GM12878 (cell line): ENCODE measurements at regions of chr12 and their contacts with region 1.

Region 1: DNA sequence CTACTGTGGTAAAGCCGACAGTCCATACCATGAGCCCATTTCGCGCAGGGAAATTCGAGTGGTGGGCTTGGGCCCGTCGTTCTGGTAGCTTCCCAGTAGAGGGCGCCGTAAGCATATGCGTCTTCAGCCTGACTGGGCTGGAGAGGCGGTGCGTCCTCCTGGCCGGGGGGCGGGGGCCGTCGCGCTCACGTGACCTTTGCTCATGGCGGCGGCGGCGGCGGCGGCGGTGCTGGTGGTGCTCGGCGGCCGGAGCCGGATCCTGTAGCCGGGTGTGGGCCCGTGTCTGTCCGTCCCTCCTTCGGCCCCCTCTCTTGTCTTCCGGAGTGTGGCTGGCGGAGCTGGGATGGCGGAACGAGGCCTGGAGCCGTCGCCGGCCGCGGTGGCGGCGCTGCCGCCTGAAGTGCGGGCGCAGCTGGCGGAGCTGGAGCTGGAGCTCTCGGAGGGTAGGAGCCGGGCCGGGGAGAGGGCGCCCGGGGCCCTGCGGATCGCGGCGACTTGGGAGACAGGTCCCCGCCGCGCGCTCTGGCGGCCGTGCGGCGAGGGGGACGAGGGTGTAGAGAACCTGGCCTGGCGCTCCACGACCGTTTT is at the start of gene DIP2B:
- DNase-seq: peak; percentile 50
- ATAC-seq: peak; percentile 87
- H3K4me3 ChIP-seq: peak within 1 kb of the TSS; percentile 96
- H3K27ac ChIP-seq: peak within 1 kb of the TSS; percentile 89
- H3K4me1 ChIP-seq: peaks cover 21% of the 10 kb centered on the region
- H3K27me3 ChIP-seq: no peaks in the 10 kb centered on the region
- CTCF ChIP-seq: peak; percentile 90 to 95 (median 93); a peak in 5 of 6 replicates
- EP300 ChIP-seq: no peak
- POLR2A ChIP-seq: peak; percentile 85
- RAD21 ChIP-seq: peak; percentile 96
- polyA plus RNA-seq, gene DIP2B: 4.5 to 4.6 TPM

Region 2: GRCh38 chr12:50458606-50459005 is 46.3 kb before region 1 on chr12:
- CTCF ChIA-PET with region 1: no interaction called
- POLR2A ChIA-PET with region 1: no interaction called
- RAD21 ChIA-PET with region 1: no interaction called
- SMC1A ChIA-PET with region 1: no interaction called
- in situ Hi-C with region 1: no loop called
- intact Hi-C with region 1: no loop called
- DNase-seq: no peak
- ATAC-seq: no peak
- H3K4me3 ChIP-seq: no peak overlapping the region
- H3K27ac ChIP-seq: no peak overlapping the region
- H3K4me1 ChIP-seq: no peaks in the 10 kb centered on the region
- H3K27me3 ChIP-seq: no peaks in the 10 kb centered on the region
- CTCF ChIP-seq: no peak
- EP300 ChIP-seq: no peak
- POLR2A ChIP-seq: no peak
- RAD21 ChIP-seq: no peak

Region 3: GRCh38 chr12:50517456-50518048 is 12.7 kb after region 1 on chr12:
- CTCF ChIA-PET with region 1: interaction called, 86 read pairs
- POLR2A ChIA-PET with region 1: interaction called, 58 read pairs
- RAD21 ChIA-PET with region 1: interaction called, 96 read pairs
- SMC1A ChIA-PET with region 1: interaction called, 85 read pairs
- in situ Hi-C with region 1: no loop called
- intact Hi-C with region 1: no loop called
- DNase-seq: peak; percentile 84
- ATAC-seq: peak; percentile 86
- H3K4me3 ChIP-seq: peak overlapping the region; percentile 15; the same call in 1 of the 2 replicates
- H3K27ac ChIP-seq: peak overlapping the region; percentile 75
- H3K4me1 ChIP-seq: peaks cover 66% of the 10 kb centered on the region
- H3K27me3 ChIP-seq: no peaks in the 10 kb centered on the region
- CTCF ChIP-seq: no peak
- EP300 ChIP-seq: no peak
- POLR2A ChIP-seq: peak; percentile 26; the same call in 1 of the 2 replicates
- RAD21 ChIP-seq: no peak

Region 4: GRCh38 chr12:50542448-50542847 is 37.6 kb after region 1 on chr12:
- CTCF ChIA-PET with region 1: interaction called, 7 read pairs
- POLR2A ChIA-PET with region 1: interaction called, 8 read pairs
- RAD21 ChIA-PET with region 1: interaction called, 56 read pairs
- SMC1A ChIA-PET with region 1: interaction called, 94 read pairs
- in situ Hi-C with region 1: no loop called
- intact Hi-C with region 1: loop called (anchors 5 kb)
- DNase-seq: no peak
- ATAC-seq: peak; percentile 89
- H3K4me3 ChIP-seq: no peak overlapping the region
- H3K27ac ChIP-seq: peak overlapping the region; percentile 39
- H3K4me1 ChIP-seq: peaks cover 19% of the 10 kb centered on the region; the same call in 1 of the 2 replicates
- H3K27me3 ChIP-seq: no peaks in the 10 kb centered on the region
- CTCF ChIP-seq: no peak
- EP300 ChIP-seq: no peak
- POLR2A ChIP-seq: no peak
- RAD21 ChIP-seq: no peak

Region 5: DNA sequence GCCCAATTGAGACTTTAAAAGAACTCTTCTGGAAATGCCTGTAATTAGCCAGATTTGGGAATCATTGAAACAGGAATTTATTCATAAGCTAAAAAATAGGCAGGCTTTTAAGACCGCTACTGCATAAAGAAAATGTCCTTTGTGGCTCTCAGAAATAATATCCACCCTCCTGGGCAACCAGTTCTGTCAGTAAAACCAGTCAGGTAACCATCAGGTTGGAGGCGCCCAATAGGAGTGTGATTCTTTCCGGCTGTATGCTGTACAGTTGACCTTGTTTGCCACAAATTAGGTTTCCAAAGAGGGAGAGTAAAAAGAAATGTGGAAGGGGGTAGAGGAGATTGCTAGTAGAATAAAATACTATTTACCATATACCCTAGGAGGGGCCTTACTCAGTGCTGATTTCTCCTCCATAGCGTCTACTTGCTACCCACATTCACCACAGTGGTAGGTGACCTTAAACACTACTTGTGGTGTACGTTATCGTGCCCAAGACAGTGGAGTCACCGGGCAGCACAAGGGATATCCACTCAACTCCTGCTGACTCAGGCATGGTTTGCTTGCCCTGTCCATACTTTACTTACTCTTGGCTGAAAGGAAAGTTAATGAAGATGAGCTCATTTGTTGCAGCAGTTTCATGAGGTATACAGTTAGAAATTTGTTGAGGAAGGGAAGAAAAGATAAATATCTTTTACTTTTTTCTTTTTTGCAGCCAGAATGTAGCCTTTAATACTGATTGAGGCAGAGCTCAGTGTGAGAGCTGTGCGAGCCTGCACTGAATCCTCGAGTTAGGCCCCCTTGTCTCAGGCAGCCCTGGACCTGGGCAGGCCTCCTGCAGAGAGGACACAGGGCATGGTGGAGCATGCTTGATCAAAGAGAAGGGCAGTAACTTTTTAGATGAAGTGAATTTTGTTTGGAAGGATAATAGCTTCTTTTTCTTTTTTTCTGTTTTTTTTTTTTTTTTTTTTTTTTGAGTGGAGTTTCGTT is 76.6 kb after region 1 on chr12:
- CTCF ChIA-PET with region 1: interaction called, 9 read pairs
- POLR2A ChIA-PET with region 1: interaction called, 4 read pairs
- RAD21 ChIA-PET with region 1: interaction called, 14 read pairs
- SMC1A ChIA-PET with region 1: interaction called, 42 read pairs
- in situ Hi-C with region 1: no loop called
- intact Hi-C with region 1: no loop called
- DNase-seq: no peak
- ATAC-seq: no peak
- H3K4me3 ChIP-seq: no peak overlapping the region
- H3K27ac ChIP-seq: no peak overlapping the region; the same call in 1 of the 2 replicates
- H3K4me1 ChIP-seq: peaks cover 14% of the 10 kb centered on the region
- H3K27me3 ChIP-seq: no peaks in the 10 kb centered on the region
- CTCF ChIP-seq: no peak
- EP300 ChIP-seq: no peak
- POLR2A ChIP-seq: no peak
- RAD21 ChIP-seq: no peak

Region 6: GRCh38 chr12:50637870-50638481 is 133.1 kb after region 1 on chr12:
- CTCF ChIA-PET with region 1: interaction called, 181 read pairs
- POLR2A ChIA-PET with region 1: interaction called, 28 read pairs
- RAD21 ChIA-PET with region 1: interaction called, 179 read pairs
- SMC1A ChIA-PET with region 1: interaction called, 227 read pairs
- in situ Hi-C with region 1: loop called (anchors 5 kb)
- intact Hi-C with region 1: loop called (anchors 1 kb)
- DNase-seq: no peak
- ATAC-seq: peak; percentile 81
- H3K4me3 ChIP-seq: no peak overlapping the region
- H3K27ac ChIP-seq: no peak overlapping the region
- H3K4me1 ChIP-seq: peaks cover 4% of the 10 kb centered on the region; the same call in 1 of the 2 replicates
- H3K27me3 ChIP-seq: no peaks in the 10 kb centered on the region
- CTCF ChIP-seq: peak; percentile 40 to 64 (median 53); a peak in 5 of 6 replicates
- EP300 ChIP-seq: no peak
- POLR2A ChIP-seq: no peak
- RAD21 ChIP-seq: peak; percentile 73

Region 7: GRCh38 chr12:50763639-50764285 is 258.9 kb after region 1 on chr12 and contains the start of gene ATF1:
- CTCF ChIA-PET with region 1: interaction called, 17 read pairs
- POLR2A ChIA-PET with region 1: interaction called, 5 read pairs
- RAD21 ChIA-PET with region 1: interaction called, 17 read pairs
- SMC1A ChIA-PET with region 1: interaction called, 10 read pairs
- in situ Hi-C with region 1: no loop called
- intact Hi-C with region 1: no loop called
- DNase-seq: peak; percentile 73
- ATAC-seq: peak; percentile 85
- H3K4me3 ChIP-seq: peak within 1 kb of the TSS; percentile 96
- H3K27ac ChIP-seq: peak within 1 kb of the TSS; percentile 97
- H3K4me1 ChIP-seq: peaks cover 4% of the 10 kb centered on the region; the same call in 1 of the 2 replicates
- H3K27me3 ChIP-seq: no peaks in the 10 kb centered on the region
- CTCF ChIP-seq: no peak
- EP300 ChIP-seq: 0 out of 4 replicates have a peak, but pooled peaks of 1 of the 2 experiments have one; percentile 14
- POLR2A ChIP-seq: peak; percentile 95
- RAD21 ChIP-seq: no peak
- polyA plus RNA-seq, gene ATF1: 15.4 to 17.0 TPM

Region 8: GRCh38 chr12:51000245-51000644 is 495.4 kb after region 1 on chr12:
- CTCF ChIA-PET with region 1: no interaction called
- POLR2A ChIA-PET with region 1: no interaction called
- RAD21 ChIA-PET with region 1: no interaction called
- SMC1A ChIA-PET with region 1: no interaction called
- in situ Hi-C with region 1: no loop called
- intact Hi-C with region 1: no loop called
- DNase-seq: no peak
- ATAC-seq: no peak
- H3K4me3 ChIP-seq: no peak overlapping the region
- H3K27ac ChIP-seq: no peak overlapping the region
- H3K4me1 ChIP-seq: no peaks in the 10 kb centered on the region
- H3K27me3 ChIP-seq: no peaks in the 10 kb centered on the region
- CTCF ChIP-seq: no peak
- EP300 ChIP-seq: no peak
- POLR2A ChIP-seq: no peak
- RAD21 ChIP-seq: no peak